ENCODE measurements at regions of chr5 and their contacts with region 1.

Region 1: GRCh38 chr5:78964887-78965286 is 20.2 kb downstream of the ARSB start:
- DNase-seq: peak; percentile 83
- ATAC-seq: peak; percentile 87
- H3K4me3 ChIP-seq: no peak overlapping the region
- H3K27ac ChIP-seq: no peak overlapping the region
- H3K4me1 ChIP-seq: no peaks in the 10 kb centered on the region
- H3K27me3 ChIP-seq: no peaks in the 10 kb centered on the region
- CTCF ChIP-seq: peak; percentile 80
- POLR2A ChIP-seq: 0 out of 2 replicates have a peak, but pooled peaks have one; percentile 20
- RAD21 ChIP-seq: peak; percentile 86

Region 2: DNA sequence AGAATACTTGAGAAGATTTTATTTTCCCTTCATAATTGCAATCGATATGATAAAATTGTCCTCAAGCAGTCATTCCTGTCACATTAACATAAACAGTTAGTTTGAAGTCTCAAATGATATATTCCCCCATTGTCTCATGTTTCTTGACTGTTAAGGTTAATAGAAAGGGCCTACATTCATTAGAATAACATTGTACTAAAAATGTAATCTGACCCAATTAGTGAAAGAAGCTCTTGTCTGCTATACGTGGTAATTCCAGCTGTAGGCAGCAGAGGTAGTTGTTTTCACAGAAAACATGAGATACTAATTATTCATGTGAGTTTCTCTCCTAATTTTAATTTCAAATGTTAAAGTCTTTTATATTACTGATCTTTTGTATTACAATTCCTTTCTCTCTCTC is 644.5 kb before region 1 on chr5:
- CTCF ChIA-PET with region 1: no interaction called
- POLR2A ChIA-PET with region 1: no interaction called
- dilution Hi-C with region 1: no loop called
- in situ Hi-C with region 1: loop called (anchors 25 kb)
- intact Hi-C with region 1: loop called (anchors 5 kb)
- DNase-seq: peak; percentile 69
- ATAC-seq: peak; percentile 91
- H3K4me3 ChIP-seq: no peak overlapping the region
- H3K27ac ChIP-seq: no peak overlapping the region
- H3K4me1 ChIP-seq: no peaks in the 10 kb centered on the region
- H3K27me3 ChIP-seq: no peaks in the 10 kb centered on the region
- CTCF ChIP-seq: peak; percentile 71
- POLR2A ChIP-seq: no peak
- RAD21 ChIP-seq: peak; percentile 79

Region 3: DNA sequence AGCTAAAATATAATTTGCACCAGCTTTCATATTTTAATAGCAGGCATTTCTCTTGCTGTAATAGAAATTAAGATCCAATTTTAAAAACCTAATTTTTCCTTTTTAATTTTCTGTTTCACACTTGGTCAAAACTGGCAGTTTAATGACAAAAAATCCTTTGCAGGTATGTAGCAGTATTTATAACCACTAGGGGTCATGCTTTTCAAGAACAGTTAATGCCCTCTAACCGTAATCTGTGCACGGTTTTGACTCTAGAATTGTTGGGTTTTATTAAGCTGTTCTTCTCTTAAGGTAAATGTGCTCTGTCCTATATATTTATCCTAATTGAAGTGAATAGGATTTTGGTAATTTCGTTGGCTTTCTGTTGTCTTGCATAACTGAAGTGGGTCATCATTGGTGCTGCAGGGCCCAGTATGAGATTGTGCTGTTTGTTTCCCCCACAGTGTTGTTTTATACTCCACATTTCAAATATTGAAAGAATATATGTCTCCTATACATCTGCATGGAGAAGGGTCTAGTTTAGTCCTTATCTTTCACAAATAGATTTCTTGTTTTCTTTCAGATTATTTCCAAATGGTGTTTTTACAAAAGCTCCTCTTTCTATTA is 497.0 kb before region 1 on chr5:
- CTCF ChIA-PET with region 1: no interaction called
- POLR2A ChIA-PET with region 1: no interaction called
- dilution Hi-C with region 1: no loop called
- in situ Hi-C with region 1: no loop called
- intact Hi-C with region 1: loop called (anchors 1 kb)
- DNase-seq: peak; percentile 74
- ATAC-seq: peak; percentile 86
- H3K4me3 ChIP-seq: no peak overlapping the region
- H3K27ac ChIP-seq: no peak overlapping the region
- H3K4me1 ChIP-seq: no peaks in the 10 kb centered on the region
- H3K27me3 ChIP-seq: no peaks in the 10 kb centered on the region
- CTCF ChIP-seq: peak; percentile 75
- POLR2A ChIP-seq: no peak
- RAD21 ChIP-seq: peak; percentile 79

Region 4: GRCh38 chr5:78547731-78548615 is 416.9 kb before region 1 on chr5:
- CTCF ChIA-PET with region 1: no interaction called
- POLR2A ChIA-PET with region 1: no interaction called
- dilution Hi-C with region 1: no loop called
- in situ Hi-C with region 1: no loop called
- intact Hi-C with region 1: loop called (anchors 5 kb)
- DNase-seq: peak; percentile 84
- ATAC-seq: peak; percentile 42
- H3K4me3 ChIP-seq: no peak overlapping the region
- H3K27ac ChIP-seq: peak overlapping the region; percentile 86
- H3K4me1 ChIP-seq: peaks cover 30% of the 10 kb centered on the region
- H3K27me3 ChIP-seq: no peaks in the 10 kb centered on the region
- CTCF ChIP-seq: no peak
- POLR2A ChIP-seq: no peak
- RAD21 ChIP-seq: no peak

Region 5: GRCh38 chr5:78757269-78758053 is 207.4 kb before region 1 on chr5:
- CTCF ChIA-PET with region 1: no interaction called
- POLR2A ChIA-PET with region 1: no interaction called
- dilution Hi-C with region 1: no loop called
- in situ Hi-C with region 1: no loop called
- intact Hi-C with region 1: loop called (anchors 5 kb)
- DNase-seq: peak; percentile 69
- ATAC-seq: peak; percentile 19; the same call in 1 of the 2 replicates
- H3K4me3 ChIP-seq: no peak overlapping the region
- H3K27ac ChIP-seq: peak overlapping the region; percentile 48; the same call in 1 of the 2 replicates
- H3K4me1 ChIP-seq: peaks cover 24% of the 10 kb centered on the region
- H3K27me3 ChIP-seq: peaks cover 23% of the 10 kb centered on the region
- CTCF ChIP-seq: no peak
- POLR2A ChIP-seq: no peak
- RAD21 ChIP-seq: no peak

Region 6: GRCh38 chr5:78899922-78900362 is 64.9 kb before region 1 on chr5:
- CTCF ChIA-PET with region 1: interaction called, 15 read pairs
- POLR2A ChIA-PET with region 1: no interaction called
- dilution Hi-C with region 1: no loop called
- in situ Hi-C with region 1: loop called (anchors 10 kb)
- intact Hi-C with region 1: loop called (anchors 1 kb)
- DNase-seq: peak; percentile 67
- ATAC-seq: peak; percentile 19; the same call in 1 of the 2 replicates
- H3K4me3 ChIP-seq: no peak overlapping the region
- H3K27ac ChIP-seq: no peak overlapping the region
- H3K4me1 ChIP-seq: peaks cover 9% of the 10 kb centered on the region
- H3K27me3 ChIP-seq: no peaks in the 10 kb centered on the region
- CTCF ChIP-seq: peak; percentile 85
- POLR2A ChIP-seq: peak; percentile 39; the same call in 1 of the 2 replicates
- RAD21 ChIP-seq: peak; percentile 93

Measured in IMR-90 (cell line).